ENCODE measurements at regions of chr1 and their contacts with region 1.

Region 1: DNA sequence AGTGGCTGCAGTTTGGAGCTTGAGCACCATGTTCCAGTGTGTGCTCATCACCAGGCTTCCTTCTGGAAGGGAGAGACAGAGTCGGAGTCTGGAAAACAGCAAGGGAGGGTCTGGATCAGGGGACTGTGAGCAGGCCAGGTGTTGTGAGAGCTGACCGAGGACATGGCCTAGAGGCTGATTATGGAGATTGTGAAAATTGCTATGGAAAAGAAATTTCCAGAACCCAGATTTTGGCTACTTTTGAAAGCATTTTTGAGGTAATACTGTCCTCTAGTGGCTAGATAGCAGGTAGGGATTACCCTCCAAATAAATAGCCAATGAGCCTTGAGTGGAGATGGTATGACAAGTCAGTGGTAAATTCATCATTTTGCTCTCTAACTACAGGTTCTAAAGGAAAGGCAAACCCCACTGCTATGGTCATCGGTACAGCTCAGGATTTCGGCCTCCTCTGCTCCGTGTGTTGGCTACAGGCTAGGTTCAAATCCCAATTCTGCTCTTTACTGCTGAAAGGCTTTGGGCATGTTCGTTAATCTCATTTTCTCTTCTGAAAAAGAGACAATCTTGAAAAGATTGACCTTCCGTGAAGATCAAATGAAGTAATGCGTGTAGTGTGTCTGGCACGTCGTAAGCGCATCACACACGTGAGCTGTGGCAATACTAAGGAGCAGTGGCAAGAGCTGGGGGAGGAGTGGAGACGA is 1.0 kb upstream of the HAO2 start:
- DNase-seq: no peak
- H3K4me3 ChIP-seq: no peak overlapping the region
- H3K27ac ChIP-seq: no peak overlapping the region
- H3K4me1 ChIP-seq: no peaks in the 10 kb centered on the region
- H3K27me3 ChIP-seq: peaks cover 0 to 4% (median 0%) of the 10 kb centered on the region in 4 donors
- CTCF ChIP-seq: peak; percentile 33 to 94 (median 74)
- POLR2A ChIP-seq: no peak

Region 2: GRCh38 chr1:119286587-119287181 is 80.9 kb before region 1 on chr1:
- intact Hi-C with region 1: loop called (anchors 5 kb)
- DNase-seq: no peak
- H3K4me3 ChIP-seq: no peak overlapping the region
- H3K27ac ChIP-seq: no peak overlapping the region
- H3K4me1 ChIP-seq: no peaks in the 10 kb centered on the region
- H3K27me3 ChIP-seq: no peaks in the 10 kb centered on the region
- CTCF ChIP-seq: peak in 5 of 6 experiments; percentile 21 to 60 (median 33)
- POLR2A ChIP-seq: no peak

Region 3: GRCh38 chr1:119314001-119314796 is 53.4 kb before region 1 on chr1:
- intact Hi-C with region 1: no loop called
- DNase-seq: no peak
- H3K4me3 ChIP-seq: no peak overlapping the region
- H3K27ac ChIP-seq: no peak overlapping the region
- H3K4me1 ChIP-seq: no peaks in the 10 kb centered on the region
- H3K27me3 ChIP-seq: no peaks in the 10 kb centered on the region
- CTCF ChIP-seq: no peak
- POLR2A ChIP-seq: no peak